ENCODE measurements at regions of chr1 and their contacts with region 1.

Region 1: GRCh38 chr1:54577612-54578011 is 29.6 kb downstream of the ACOT11 start:
- DNase-seq: peak; percentile 93

Region 2: DNA sequence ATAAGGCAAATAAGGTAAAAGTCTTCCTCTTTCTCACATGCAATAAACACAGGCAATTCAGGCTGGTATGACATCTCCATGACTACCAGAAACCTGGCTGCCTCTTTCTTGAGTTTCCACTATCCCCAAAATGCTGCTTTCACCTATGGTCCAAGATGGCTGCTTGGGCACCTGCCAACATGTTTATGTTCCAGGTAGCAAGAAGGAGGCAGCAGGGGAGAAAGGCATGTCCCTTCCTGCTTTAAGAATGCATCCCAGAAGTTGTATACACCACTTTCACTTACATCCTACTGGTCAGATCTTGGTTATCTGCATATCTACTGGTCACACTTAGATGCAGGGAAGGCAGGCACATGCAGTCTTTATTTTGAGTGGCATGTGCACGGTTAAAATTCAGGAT is 49.0 kb before region 1 on chr1:
- intact Hi-C with region 1: loop called in 1 of 2 experiments (anchors 1 kb)
- DNase-seq: peak; percentile 13

Region 3: GRCh38 chr1:54698346-54698745 is 120.7 kb after region 1 on chr1:
- intact Hi-C with region 1: loop called in 1 of 2 experiments (anchors 5 kb)
- DNase-seq: peak; percentile 31

Region 4: GRCh38 chr1:54715493-54716298 is 138.1 kb after region 1 on chr1 and contains the start of gene TTC4:
- intact Hi-C with region 1: no loop called
- DNase-seq: peak; percentile 96
- total RNA-seq, gene TTC4: 13.9 to 16.8 TPM

Region 5: GRCh38 chr1:55071477-55071876 is 493.9 kb after region 1 on chr1:
- intact Hi-C with region 1: no loop called
- DNase-seq: no peak

Region 6: DNA sequence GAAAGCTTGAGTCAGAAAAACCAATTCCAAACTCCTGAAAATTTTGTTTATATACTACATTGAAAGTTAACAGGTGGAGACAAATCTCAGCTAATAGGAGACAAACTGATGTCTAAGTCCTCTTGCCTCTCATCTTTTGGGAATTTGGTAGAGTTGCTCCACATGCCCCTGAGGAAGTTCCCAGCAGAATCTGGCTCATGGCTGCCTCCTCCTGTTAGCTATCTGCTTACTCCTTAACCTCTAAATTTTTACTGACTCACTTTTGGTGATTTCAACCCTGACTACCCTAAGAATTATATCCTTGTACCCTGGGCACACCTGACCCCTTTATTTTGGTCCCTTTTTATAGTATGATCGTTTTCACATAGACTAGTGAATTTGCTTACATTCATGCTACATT is 1271.3 kb after region 1 on chr1:
- intact Hi-C with region 1: no loop called
- DNase-seq: no peak